ENCODE measurements at regions of chr3 and their contacts with region 1.

Region 1: DNA sequence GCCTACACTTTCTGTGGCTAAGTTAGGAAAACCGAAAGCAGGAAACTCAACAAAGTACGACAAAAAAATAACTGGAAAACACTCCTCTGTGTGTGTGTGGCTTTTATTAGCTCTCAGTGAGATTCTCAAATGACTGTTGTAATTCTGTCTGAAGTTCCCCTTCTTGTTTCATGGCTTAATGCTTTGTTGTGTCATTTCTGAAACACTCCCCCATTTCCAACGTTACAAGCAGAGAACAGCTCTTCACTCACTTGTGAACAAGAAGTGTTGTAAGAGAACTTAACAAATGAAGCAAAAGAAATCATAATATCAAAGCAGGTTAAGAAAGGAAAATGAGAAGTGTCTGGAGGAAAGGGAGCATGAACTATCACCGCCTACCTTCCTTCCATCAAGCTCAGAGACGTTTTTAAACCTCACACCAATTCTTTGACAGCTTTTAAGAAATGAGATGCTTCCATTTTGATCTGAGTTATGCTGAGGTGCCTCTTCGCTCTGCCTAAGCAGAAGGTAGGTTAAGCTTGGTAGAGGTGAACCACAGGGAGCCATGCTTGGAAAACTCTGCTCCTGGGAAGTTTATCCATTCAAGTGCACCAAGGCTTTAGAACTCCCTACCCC is 12.4 kb upstream of the SEC62 start:
- DNase-seq: no peak
- ATAC-seq: no peak
- H3K4me3 ChIP-seq: no peak overlapping the region
- H3K27ac ChIP-seq: peak overlapping the region in 1 of 10 donors; percentile 85
- H3K4me1 ChIP-seq: peaks cover 0 to 14% (median 0%) of the 10 kb centered on the region in 9 donors
- H3K27me3 ChIP-seq: no peaks in the 10 kb centered on the region
- CTCF ChIP-seq: no peak

Region 2: GRCh38 chr3:169871129-169871886 is 82.9 kb before region 1 on chr3:
- intact Hi-C with region 1: loop called in 1 of 10 experiments (anchors 10 kb)
- DNase-seq: no peak
- ATAC-seq: no peak
- H3K4me3 ChIP-seq: no peak overlapping the region
- H3K27ac ChIP-seq: no peak overlapping the region
- H3K4me1 ChIP-seq: no peaks in the 10 kb centered on the region
- H3K27me3 ChIP-seq: peaks cover 0 to 5% (median 0%) of the 10 kb centered on the region in 7 donors
- CTCF ChIP-seq: no peak

Region 3: DNA sequence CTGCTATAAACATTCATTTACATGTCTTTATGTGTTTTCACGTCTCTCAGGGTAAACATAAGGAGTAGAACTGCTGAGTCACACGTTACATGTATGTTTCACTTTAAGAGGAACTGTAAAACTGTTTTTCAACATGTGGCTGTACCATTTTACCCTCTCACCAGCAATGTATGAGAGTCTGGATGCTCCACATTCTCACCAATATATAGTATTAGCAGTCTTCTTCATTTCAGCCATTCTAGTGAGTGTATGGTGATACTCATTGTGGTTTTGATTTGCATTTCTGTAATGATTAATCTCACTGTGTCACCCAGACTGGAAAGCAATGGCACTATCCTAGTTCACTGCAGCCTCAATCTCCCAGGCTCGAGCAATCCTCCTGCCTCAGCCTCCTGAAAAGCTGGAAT is 190.2 kb after region 1 on chr3:
- intact Hi-C with region 1: no loop called
- DNase-seq: no peak
- ATAC-seq: no peak
- H3K4me3 ChIP-seq: no peak overlapping the region
- H3K27ac ChIP-seq: no peak overlapping the region
- H3K4me1 ChIP-seq: peaks cover 0 to 19% (median 4%) of the 10 kb centered on the region in 9 donors
- H3K27me3 ChIP-seq: no peaks in the 10 kb centered on the region
- CTCF ChIP-seq: no peak

Region 4: DNA sequence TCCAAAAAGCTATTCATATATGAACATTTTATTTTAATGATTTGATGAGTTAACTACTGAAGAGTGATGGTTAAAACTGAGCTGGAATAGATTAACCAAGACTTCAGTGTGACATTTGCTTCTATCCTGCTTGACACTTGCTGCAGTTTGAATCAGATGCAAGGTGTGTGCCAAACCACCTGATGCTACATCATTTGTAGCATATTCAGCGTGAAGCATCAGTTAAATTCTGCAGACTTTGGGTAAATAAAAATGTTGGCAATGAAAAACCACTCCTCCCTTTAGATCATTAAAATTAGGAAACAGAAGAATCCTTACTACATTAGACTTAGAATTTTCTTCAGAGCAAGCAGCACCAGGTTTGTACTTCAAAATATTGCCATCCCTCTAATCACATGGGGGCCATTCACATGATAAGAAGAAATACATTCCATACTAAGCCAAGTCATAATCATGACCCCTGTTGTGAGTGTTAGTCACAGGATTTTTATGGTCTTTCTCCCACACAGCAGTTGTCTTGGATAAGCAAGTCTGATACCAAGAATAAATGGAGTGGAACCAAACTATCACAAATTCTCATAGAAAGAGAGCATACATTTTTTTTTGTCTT is 1666.7 kb after region 1 on chr3:
- intact Hi-C with region 1: no loop called
- DNase-seq: no peak
- ATAC-seq: no peak
- H3K4me3 ChIP-seq: no peak overlapping the region
- H3K27ac ChIP-seq: no peak overlapping the region
- H3K4me1 ChIP-seq: peaks cover 0 to 9% (median 5%) of the 10 kb centered on the region in 9 donors
- H3K27me3 ChIP-seq: no peaks in the 10 kb centered on the region
- CTCF ChIP-seq: no peak